IMR-90 (cell line): ENCODE measurements at regions of chr7 and their contacts with region 1.

Region 1: GRCh38 chr7:134016223-134016941 is 110.8 kb upstream of the LRGUK start:
- DNase-seq: peak; percentile 39
- ATAC-seq: peak; percentile 77
- H3K4me3 ChIP-seq: no peak overlapping the region
- H3K27ac ChIP-seq: no peak overlapping the region
- H3K4me1 ChIP-seq: no peaks in the 10 kb centered on the region
- H3K27me3 ChIP-seq: no peaks in the 10 kb centered on the region
- CTCF ChIP-seq: peak; percentile 67
- POLR2A ChIP-seq: no peak
- RAD21 ChIP-seq: peak; percentile 76

Region 2: DNA sequence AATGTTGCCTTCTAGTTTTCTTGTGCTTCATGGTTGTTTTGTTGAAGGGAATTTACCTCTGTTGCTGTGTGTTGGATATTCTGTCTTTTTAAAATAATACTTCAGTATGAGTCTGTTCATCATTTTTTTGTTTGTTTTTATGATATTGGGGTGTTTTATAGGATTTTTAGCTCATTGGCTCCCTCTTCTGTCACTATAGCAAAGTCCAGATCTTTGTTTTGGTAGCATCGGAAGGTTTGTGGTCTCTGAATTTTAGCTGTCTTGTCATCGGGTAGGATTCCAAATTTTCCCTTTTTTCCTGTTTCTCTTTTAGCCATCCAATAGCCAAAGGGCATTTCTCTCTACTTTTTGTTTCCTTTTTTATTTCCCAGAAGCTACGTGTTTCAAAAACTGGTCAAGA is 672.1 kb before region 1 on chr7:
- CTCF ChIA-PET with region 1: interaction called, 3 read pairs
- POLR2A ChIA-PET with region 1: no interaction called
- dilution Hi-C with region 1: no loop called
- in situ Hi-C with region 1: no loop called
- intact Hi-C with region 1: loop called (anchors 10 kb)
- DNase-seq: peak; percentile 32
- ATAC-seq: peak; percentile 59
- H3K4me3 ChIP-seq: no peak overlapping the region
- H3K27ac ChIP-seq: no peak overlapping the region
- H3K4me1 ChIP-seq: no peaks in the 10 kb centered on the region
- H3K27me3 ChIP-seq: no peaks in the 10 kb centered on the region
- CTCF ChIP-seq: peak; percentile 63
- POLR2A ChIP-seq: no peak
- RAD21 ChIP-seq: peak; percentile 64

Region 3: DNA sequence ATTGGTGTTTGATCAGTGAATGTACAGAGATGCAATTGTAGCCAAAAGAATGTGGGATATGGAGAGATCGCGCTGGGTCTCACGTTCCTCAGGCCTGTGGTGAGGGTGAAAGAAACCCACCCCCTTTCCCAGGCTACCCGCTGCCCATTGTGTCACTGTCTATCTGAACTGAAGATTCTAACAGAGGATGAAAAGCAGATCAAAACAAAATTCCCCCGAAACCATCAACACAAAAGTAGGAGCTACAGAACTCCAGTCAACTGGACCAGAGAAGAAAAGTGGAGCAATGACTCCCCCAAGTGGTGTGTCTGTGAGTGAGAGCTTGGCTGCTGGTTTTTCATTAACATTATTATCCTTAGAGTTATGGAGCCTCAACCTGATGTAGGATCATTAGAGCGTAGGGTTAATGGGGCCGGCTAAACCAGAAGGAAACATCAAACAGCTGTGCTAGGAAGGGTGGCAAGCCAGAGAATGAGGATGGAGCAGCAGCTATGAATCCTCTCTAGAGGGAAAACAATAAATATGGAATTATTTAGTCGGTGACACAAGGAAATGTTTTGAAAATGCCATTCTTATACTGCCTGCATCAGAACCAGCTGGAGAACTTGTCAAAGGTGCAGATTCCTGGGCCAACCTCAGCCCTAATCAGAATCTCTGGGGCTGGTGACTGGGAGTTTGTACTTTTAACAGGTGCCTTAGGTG is 404.2 kb after region 1 on chr7:
- CTCF ChIA-PET with region 1: no interaction called
- POLR2A ChIA-PET with region 1: no interaction called
- dilution Hi-C with region 1: no loop called
- in situ Hi-C with region 1: no loop called
- intact Hi-C with region 1: loop called (anchors 5 kb)
- DNase-seq: peak; percentile 55
- ATAC-seq: peak; percentile 94
- H3K4me3 ChIP-seq: no peak overlapping the region
- H3K27ac ChIP-seq: no peak overlapping the region
- H3K4me1 ChIP-seq: no peaks in the 10 kb centered on the region
- H3K27me3 ChIP-seq: peaks cover 15% of the 10 kb centered on the region
- CTCF ChIP-seq: peak; percentile 76
- POLR2A ChIP-seq: no peak
- RAD21 ChIP-seq: peak; percentile 77